Natural killer cell (primary cell): ENCODE measurements at regions of chr18 and their contacts with region 1.

Region 1: GRCh38 chr18:8988261-8988871 is 114.1 kb upstream of the NDUFV2 start:
- DNase-seq: peak; percentile 17 to 79
- ATAC-seq: peak in 2 of 3 donors; percentile 58 to 73
- H3K4me3 ChIP-seq: no peak overlapping the region
- H3K4me3 Mint-ChIP-seq: no peak overlapping the region
- H3K27ac ChIP-seq: no peak overlapping the region
- H3K27ac Mint-ChIP-seq: no peak overlapping the region
- H3K4me1 ChIP-seq: no peaks in the 10 kb centered on the region
- H3K4me1 Mint-ChIP-seq: no peaks in the 10 kb centered on the region
- H3K27me3 ChIP-seq: no peaks in the 10 kb centered on the region
- H3K27me3 Mint-ChIP-seq: peaks cover 15 to 32% of the 10 kb centered on the region in 2 donors
- CTCF ChIP-seq: peak; percentile 43

Region 2: GRCh38 chr18:8654503-8655451 is 333.6 kb before region 1 on chr18:
- intact Hi-C with region 1: loop called (anchors 2 kb)
- DNase-seq: peak in 1 of 2 donors; percentile 51
- ATAC-seq: peak in 2 of 3 donors; percentile 42 to 58
- H3K4me3 ChIP-seq: no peak overlapping the region
- H3K4me3 Mint-ChIP-seq: no peak overlapping the region
- H3K27ac ChIP-seq: no peak overlapping the region
- H3K27ac Mint-ChIP-seq: no peak overlapping the region
- H3K4me1 ChIP-seq: no peaks in the 10 kb centered on the region
- H3K4me1 Mint-ChIP-seq: no peaks in the 10 kb centered on the region
- H3K27me3 ChIP-seq: peaks cover 3% of the 10 kb centered on the region
- H3K27me3 Mint-ChIP-seq: peaks cover 23 to 39% of the 10 kb centered on the region in 2 donors
- CTCF ChIP-seq: peak; percentile 82

Region 3: GRCh38 chr18:8696749-8697211 is 291.6 kb before region 1 on chr18:
- intact Hi-C with region 1: loop called (anchors 2 kb)
- DNase-seq: peak; percentile 68 to 81
- ATAC-seq: peak; percentile 89 to 98 (median 96)
- H3K4me3 ChIP-seq: no peak overlapping the region
- H3K4me3 Mint-ChIP-seq: no peak overlapping the region
- H3K27ac ChIP-seq: no peak overlapping the region
- H3K27ac Mint-ChIP-seq: no peak overlapping the region
- H3K4me1 ChIP-seq: no peaks in the 10 kb centered on the region
- H3K4me1 Mint-ChIP-seq: no peaks in the 10 kb centered on the region
- H3K27me3 ChIP-seq: peaks cover 3% of the 10 kb centered on the region
- H3K27me3 Mint-ChIP-seq: peaks cover 10 to 20% of the 10 kb centered on the region in 2 donors
- CTCF ChIP-seq: peak; percentile 95

Region 4: GRCh38 chr18:8962855-8963635 is 25.3 kb before region 1 on chr18:
- intact Hi-C with region 1: no loop called
- DNase-seq: no peak
- ATAC-seq: peak in 1 of 3 donors; percentile 6
- H3K4me3 ChIP-seq: no peak overlapping the region
- H3K4me3 Mint-ChIP-seq: no peak overlapping the region
- H3K27ac ChIP-seq: no peak overlapping the region
- H3K27ac Mint-ChIP-seq: no peak overlapping the region
- H3K4me1 ChIP-seq: no peaks in the 10 kb centered on the region
- H3K4me1 Mint-ChIP-seq: no peaks in the 10 kb centered on the region
- H3K27me3 ChIP-seq: no peaks in the 10 kb centered on the region
- H3K27me3 Mint-ChIP-seq: peaks cover 6 to 8% of the 10 kb centered on the region in 2 donors
- CTCF ChIP-seq: no peak

Region 5: DNA sequence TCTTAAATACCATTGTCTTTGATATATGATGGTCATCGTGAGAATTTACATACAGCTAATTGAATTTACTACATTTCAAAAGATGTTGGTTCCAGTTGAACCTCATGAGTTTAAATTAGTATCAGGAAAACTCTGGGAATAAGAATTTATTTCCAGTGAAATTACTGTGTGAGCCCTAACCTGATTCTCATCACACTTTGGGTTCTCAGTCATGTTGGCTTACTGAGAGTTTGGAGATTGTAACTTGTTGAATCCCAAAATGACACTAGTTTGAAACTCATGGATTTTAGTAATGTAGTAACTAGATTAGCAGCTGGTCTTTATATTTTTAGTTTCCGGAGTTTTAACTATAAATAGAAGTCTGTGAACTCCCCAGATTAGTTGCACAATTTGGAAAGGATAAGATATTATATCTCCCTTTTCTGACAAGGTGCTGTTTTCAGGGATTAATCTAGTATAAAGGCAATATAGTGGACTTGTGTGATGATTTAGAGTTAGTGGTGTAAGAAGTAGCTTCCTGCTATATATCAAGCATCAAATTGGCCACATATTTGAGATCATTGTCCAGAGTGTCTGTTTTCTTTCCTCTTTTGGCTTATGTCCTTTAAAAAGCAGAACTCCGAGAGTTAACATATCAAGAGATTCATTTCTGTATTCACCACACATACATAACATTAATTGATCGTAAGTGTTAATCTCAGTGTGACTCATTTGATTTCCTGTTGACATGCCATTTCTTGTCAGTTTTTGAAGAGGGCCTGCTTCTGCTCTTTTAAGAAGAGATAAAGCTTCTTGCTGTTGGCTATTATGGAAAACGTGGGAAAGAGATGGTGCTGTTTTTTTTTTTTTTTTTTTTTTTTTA is 129.8 kb after region 1 on chr18:
- intact Hi-C with region 1: no loop called
- DNase-seq: peak in 1 of 2 donors; percentile 73
- ATAC-seq: peak; percentile 64 to 74 (median 64)
- H3K4me3 ChIP-seq: no peak overlapping the region
- H3K4me3 Mint-ChIP-seq: peak overlapping the region; percentile 63
- H3K27ac ChIP-seq: peak overlapping the region; percentile 88
- H3K27ac Mint-ChIP-seq: peak overlapping the region; percentile 90 to 96
- H3K4me1 ChIP-seq: peaks cover 19% of the 10 kb centered on the region
- H3K4me1 Mint-ChIP-seq: peaks cover 50 to 57% of the 10 kb centered on the region in 2 donors
- H3K27me3 ChIP-seq: no peaks in the 10 kb centered on the region
- H3K27me3 Mint-ChIP-seq: no peaks in the 10 kb centered on the region
- CTCF ChIP-seq: no peak

Region 6: DNA sequence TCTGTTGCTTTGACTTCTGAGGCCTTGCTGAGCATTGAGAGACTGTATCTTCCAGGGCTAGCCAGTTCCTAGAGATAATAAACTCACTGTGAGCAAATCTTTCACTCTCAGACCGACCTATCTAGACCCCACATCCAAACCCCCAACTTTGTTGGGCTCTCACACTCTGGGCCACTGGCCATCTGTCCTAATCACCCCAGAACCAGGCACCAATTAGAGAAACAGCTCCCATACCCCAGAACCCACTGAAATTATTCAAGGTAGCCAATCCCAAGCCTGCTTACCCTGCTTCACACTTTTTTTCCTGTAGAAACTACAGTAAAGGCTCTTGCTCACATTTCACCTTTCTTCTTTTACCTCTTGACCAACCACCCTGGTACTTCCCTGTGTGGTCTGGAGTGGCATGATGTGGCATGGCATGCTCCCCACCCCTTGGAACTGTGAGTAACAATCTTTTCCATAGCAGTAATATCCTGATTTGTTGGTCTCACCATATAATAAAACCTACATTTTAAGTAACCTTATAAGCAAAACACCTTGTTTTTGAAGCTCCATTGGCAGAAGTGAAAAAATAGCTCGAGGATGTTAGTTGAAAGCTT is 203.4 kb after region 1 on chr18:
- intact Hi-C with region 1: no loop called
- DNase-seq: no peak
- ATAC-seq: peak in 1 of 3 donors; percentile 8
- H3K4me3 ChIP-seq: no peak overlapping the region
- H3K4me3 Mint-ChIP-seq: no peak overlapping the region
- H3K27ac ChIP-seq: no peak overlapping the region
- H3K27ac Mint-ChIP-seq: peak overlapping the region; percentile 66 to 75
- H3K4me1 ChIP-seq: no peaks in the 10 kb centered on the region
- H3K4me1 Mint-ChIP-seq: peaks cover 24 to 37% of the 10 kb centered on the region in 2 donors
- H3K27me3 ChIP-seq: no peaks in the 10 kb centered on the region
- H3K27me3 Mint-ChIP-seq: no peaks in the 10 kb centered on the region
- CTCF ChIP-seq: no peak